Activated CD4-positive, alpha-beta T cell treated with anti-CD3 and anti-CD28 coated beads for 36 hours (primary cell): ENCODE measurements at regions of chr11 and their contacts with region 1.

Region 1: DNA sequence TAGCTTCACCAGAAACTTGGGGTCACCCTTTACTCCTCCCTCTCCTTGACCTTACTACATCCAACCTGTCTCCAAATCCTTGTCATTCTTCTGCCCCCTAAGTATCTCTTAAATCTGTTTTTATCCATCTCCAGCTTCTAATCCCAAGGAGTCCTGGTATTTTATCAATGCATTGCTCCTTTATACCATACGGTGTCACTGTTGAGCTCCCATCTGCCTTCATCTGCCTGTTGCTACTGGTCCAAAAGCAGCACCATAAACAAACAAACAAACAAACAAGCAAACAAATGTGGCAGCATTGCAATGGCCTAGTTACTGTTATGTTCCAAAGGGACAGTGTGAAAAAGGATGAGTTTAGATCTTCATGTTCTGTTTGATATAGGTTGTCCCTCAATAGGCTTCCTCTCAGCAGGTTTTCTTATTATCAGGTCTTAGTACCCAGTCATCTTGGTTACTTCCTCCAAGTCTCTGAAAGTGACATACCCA is 34.2 kb downstream of the DNHD1 start:
- DNase-seq: peak; percentile 26
- ATAC-seq: peak; percentile 71
- H3K4me3 Mint-ChIP-seq: no peak overlapping the region
- H3K27ac Mint-ChIP-seq: no peak overlapping the region
- H3K4me1 Mint-ChIP-seq: peaks cover 11% of the 10 kb centered on the region
- H3K27me3 Mint-ChIP-seq: no peaks in the 10 kb centered on the region

Region 2: DNA sequence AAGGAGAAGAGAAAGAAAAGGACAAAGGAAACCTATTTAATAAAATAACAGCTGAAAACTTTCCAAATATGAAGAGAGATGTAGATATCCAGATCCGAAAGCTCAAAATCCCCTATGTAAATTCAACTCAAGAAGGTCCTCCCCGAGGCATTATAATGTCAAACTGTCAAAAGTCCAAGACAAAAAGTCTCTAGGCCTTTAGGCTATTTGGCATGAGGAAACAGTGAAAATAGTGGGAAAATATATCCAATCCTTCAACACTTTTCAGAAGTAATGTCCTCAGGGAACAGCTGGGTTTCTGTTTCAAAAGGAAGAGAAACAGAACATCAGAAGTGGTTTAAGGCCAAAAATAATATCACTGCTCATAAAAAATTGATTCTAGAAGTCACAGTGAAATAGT is 652.7 kb before region 1 on chr11:
- CTCF ChIA-PET with region 1: no interaction called
- POLR2A ChIA-PET with region 1: no interaction called
- intact Hi-C with region 1: no loop called
- DNase-seq: no peak
- ATAC-seq: no peak
- H3K4me3 Mint-ChIP-seq: no peak overlapping the region
- H3K27ac Mint-ChIP-seq: no peak overlapping the region
- H3K4me1 Mint-ChIP-seq: no peaks in the 10 kb centered on the region
- H3K27me3 Mint-ChIP-seq: peaks cover 8% of the 10 kb centered on the region

Region 3: DNA sequence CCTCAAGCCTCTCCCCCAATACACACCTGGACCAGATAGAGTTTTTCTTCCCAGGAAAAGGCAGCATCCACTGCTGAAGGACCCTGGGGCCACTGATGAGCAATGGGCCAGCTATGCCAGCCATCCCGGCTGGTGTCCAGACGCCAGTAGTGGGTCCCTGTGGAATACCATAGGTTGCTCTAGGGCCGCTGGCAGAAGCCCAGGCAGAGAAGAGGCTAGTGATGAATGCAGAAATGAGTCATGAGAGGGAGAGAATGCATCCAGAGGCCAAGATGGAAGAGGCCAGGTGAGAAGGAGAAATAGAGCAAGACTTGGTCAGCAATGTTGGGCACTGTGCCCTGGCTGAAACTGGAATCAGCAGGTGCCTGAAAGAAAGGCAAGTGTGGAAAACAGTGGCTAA is 99.4 kb before region 1 on chr11:
- CTCF ChIA-PET with region 1: no interaction called
- POLR2A ChIA-PET with region 1: no interaction called
- intact Hi-C with region 1: no loop called
- DNase-seq: no peak
- ATAC-seq: no peak
- H3K4me3 Mint-ChIP-seq: no peak overlapping the region
- H3K27ac Mint-ChIP-seq: no peak overlapping the region
- H3K4me1 Mint-ChIP-seq: peaks cover 5% of the 10 kb centered on the region
- H3K27me3 Mint-ChIP-seq: no peaks in the 10 kb centered on the region

Region 4: DNA sequence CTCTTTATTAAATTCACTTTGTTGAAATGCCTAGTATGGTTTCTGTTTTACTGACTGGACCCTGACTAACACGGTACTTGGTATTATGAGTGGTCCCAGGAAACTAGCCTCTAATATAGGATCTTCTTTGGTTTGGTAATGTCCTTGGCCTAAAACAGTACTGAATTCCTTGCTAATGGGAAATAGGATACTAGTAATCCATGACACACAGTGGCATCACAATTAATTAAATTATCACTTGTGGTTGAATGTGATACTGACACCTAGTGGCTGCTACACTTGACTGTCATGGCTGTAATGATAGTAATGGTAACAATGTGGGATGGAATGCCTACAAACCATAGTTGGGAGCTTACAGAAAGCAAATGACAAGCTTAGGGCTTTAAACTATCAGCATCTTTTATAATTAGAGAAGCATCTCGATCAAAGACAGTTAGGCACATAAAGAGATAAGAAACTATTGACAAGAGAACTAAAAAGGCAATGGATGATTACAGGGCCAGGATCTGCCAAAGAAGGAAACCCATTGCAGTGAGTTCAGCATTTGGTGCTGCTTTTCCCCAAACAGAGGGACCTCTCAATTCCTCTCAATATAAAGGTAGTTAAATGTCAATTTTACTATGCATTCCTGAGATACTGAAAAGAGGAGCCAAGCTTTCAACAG is 25.6 kb before region 1 on chr11:
- CTCF ChIA-PET with region 1: interaction called, 16 read pairs
- POLR2A ChIA-PET with region 1: interaction called, 4 read pairs
- intact Hi-C with region 1: no loop called
- DNase-seq: no peak
- ATAC-seq: peak; percentile 57
- H3K4me3 Mint-ChIP-seq: no peak overlapping the region
- H3K27ac Mint-ChIP-seq: no peak overlapping the region
- H3K4me1 Mint-ChIP-seq: no peaks in the 10 kb centered on the region
- H3K27me3 Mint-ChIP-seq: no peaks in the 10 kb centered on the region

Region 5: GRCh38 chr11:6542727-6543126 is 11.4 kb after region 1 on chr11:
- CTCF ChIA-PET with region 1: interaction called, 11 read pairs
- POLR2A ChIA-PET with region 1: interaction called, 3 read pairs
- intact Hi-C with region 1: no loop called
- DNase-seq: no peak
- ATAC-seq: no peak
- H3K4me3 Mint-ChIP-seq: no peak overlapping the region
- H3K27ac Mint-ChIP-seq: no peak overlapping the region
- H3K4me1 Mint-ChIP-seq: no peaks in the 10 kb centered on the region
- H3K27me3 Mint-ChIP-seq: no peaks in the 10 kb centered on the region